BJ (cell line): ENCODE measurements at regions of chr9 and their contacts with region 1.

Region 1: GRCh38 chr9:17116400-17116837 is 18.4 kb upstream of the CNTLN start:
- DNase-seq: no peak
- H3K4me3 ChIP-seq: no peak overlapping the region
- H3K27me3 ChIP-seq: no peaks in the 10 kb centered on the region
- CTCF ChIP-seq: peak; percentile 35; the same call in 1 of the 2 replicates

Region 2: DNA sequence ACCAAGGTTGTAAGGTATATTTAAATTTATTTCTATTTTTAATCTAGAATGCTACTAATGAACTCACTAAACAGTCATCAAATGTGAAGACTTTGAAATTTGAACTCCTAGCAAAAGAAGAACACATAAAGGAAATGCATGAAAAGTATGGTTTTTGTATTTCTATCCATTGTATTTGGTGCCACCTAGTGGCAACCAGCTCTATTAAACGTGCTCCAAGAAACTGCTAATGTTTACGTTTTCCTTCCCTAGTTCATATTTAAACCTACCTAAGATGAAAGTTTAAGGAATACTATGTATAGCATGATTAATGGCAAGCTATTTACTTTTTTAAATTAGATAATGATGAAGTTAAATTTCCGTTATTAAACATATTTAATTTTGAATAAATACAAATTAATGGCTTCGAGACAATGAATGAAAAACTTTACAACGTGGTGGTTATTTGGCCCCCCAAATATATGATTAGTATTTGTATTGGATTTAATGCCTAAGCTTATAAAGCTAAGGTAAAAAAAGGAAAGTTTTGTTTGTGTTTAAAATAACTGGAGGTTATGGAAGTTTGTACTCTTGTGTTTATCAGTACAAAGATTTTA is 346.5 kb after region 1 on chr9:
- CTCF ChIA-PET with region 1: interaction called, 13 read pairs
- POLR2A ChIA-PET with region 1: no interaction called
- DNase-seq: peak; percentile 17
- H3K4me3 ChIP-seq: no peak overlapping the region
- H3K27me3 ChIP-seq: no peaks in the 10 kb centered on the region
- CTCF ChIP-seq: peak; percentile 61